Activated CD8-positive, alpha-beta T cell treated with anti-CD3 and anti-CD28 coated beads, Interleukin-2, amount 10 ng/mL, durations not matched to agents 7 days and 5 days (primary cell): ENCODE measurements at regions of chr15 and their contacts with region 1.

Region 1: DNA sequence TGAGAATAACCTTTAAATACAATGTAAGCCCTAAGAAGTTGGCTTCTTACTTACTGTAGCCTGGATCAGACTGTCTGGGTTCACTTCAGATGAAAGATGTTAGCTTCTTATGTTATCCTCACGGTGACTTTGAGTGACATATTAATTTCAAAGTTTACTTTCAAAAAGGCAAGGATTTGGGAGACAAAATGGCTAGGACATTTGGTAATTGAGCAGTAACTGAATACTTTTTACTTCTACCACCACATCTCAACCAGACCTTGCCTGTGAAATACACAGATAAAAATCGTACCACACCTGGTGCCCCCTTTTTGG is 36.0 kb upstream of the BNIP2 start:
- DNase-seq: no peak
- ATAC-seq: no peak
- H3K4me3 Mint-ChIP-seq: no peak overlapping the region
- H3K27ac Mint-ChIP-seq: no peak overlapping the region
- H3K4me1 Mint-ChIP-seq: no peaks in the 10 kb centered on the region
- H3K27me3 Mint-ChIP-seq: peaks cover 15% of the 10 kb centered on the region

Region 2: GRCh38 chr15:59688841-59689625 is 36.1 kb before region 1 on chr15 and contains the start of gene BNIP2:
- CTCF ChIA-PET with region 1: interaction called, 14 read pairs
- POLR2A ChIA-PET with region 1: no interaction called
- DNase-seq: peak; percentile 100
- ATAC-seq: peak; percentile 94
- H3K4me3 Mint-ChIP-seq: peak within 1 kb of the TSS; percentile 88
- H3K27ac Mint-ChIP-seq: peak within 1 kb of the TSS; percentile 96
- H3K4me1 Mint-ChIP-seq: peaks cover 40% of the 10 kb centered on the region
- H3K27me3 Mint-ChIP-seq: no peaks in the 10 kb centered on the region
- total RNA-seq, gene BNIP2: 69.0 to 74.8 TPM

Region 3: GRCh38 chr15:59699810-59700431 is 25.2 kb before region 1 on chr15:
- CTCF ChIA-PET with region 1: no interaction called
- POLR2A ChIA-PET with region 1: no interaction called
- DNase-seq: no peak
- ATAC-seq: no peak
- H3K4me3 Mint-ChIP-seq: no peak overlapping the region
- H3K27ac Mint-ChIP-seq: no peak overlapping the region
- H3K4me1 Mint-ChIP-seq: no peaks in the 10 kb centered on the region
- H3K27me3 Mint-ChIP-seq: peaks cover 19% of the 10 kb centered on the region

Region 4: GRCh38 chr15:59711451-59712243 is 13.5 kb before region 1 on chr15:
- CTCF ChIA-PET with region 1: interaction called, 16 read pairs
- POLR2A ChIA-PET with region 1: no interaction called
- DNase-seq: no peak
- ATAC-seq: no peak
- H3K4me3 Mint-ChIP-seq: no peak overlapping the region
- H3K27ac Mint-ChIP-seq: no peak overlapping the region
- H3K4me1 Mint-ChIP-seq: no peaks in the 10 kb centered on the region
- H3K27me3 Mint-ChIP-seq: peaks cover 11% of the 10 kb centered on the region

Region 5: GRCh38 chr15:59741274-59741906 is 16.3 kb after region 1 on chr15:
- CTCF ChIA-PET with region 1: interaction called, 14 read pairs
- POLR2A ChIA-PET with region 1: interaction called, 3 read pairs
- DNase-seq: no peak
- ATAC-seq: no peak
- H3K4me3 Mint-ChIP-seq: no peak overlapping the region
- H3K27ac Mint-ChIP-seq: no peak overlapping the region
- H3K4me1 Mint-ChIP-seq: no peaks in the 10 kb centered on the region
- H3K27me3 Mint-ChIP-seq: peaks cover 8% of the 10 kb centered on the region

Region 6: GRCh38 chr15:59751552-59752413 is 26.7 kb after region 1 on chr15:
- CTCF ChIA-PET with region 1: interaction called, 15 read pairs
- POLR2A ChIA-PET with region 1: no interaction called
- DNase-seq: no peak
- ATAC-seq: peak; percentile 90
- H3K4me3 Mint-ChIP-seq: no peak overlapping the region
- H3K27ac Mint-ChIP-seq: no peak overlapping the region
- H3K4me1 Mint-ChIP-seq: peaks cover 4% of the 10 kb centered on the region
- H3K27me3 Mint-ChIP-seq: peaks cover 10% of the 10 kb centered on the region

Region 7: GRCh38 chr15:59825913-59826312 is 100.8 kb after region 1 on chr15:
- CTCF ChIA-PET with region 1: no interaction called
- POLR2A ChIA-PET with region 1: no interaction called
- DNase-seq: no peak
- ATAC-seq: no peak
- H3K4me3 Mint-ChIP-seq: no peak overlapping the region
- H3K27ac Mint-ChIP-seq: no peak overlapping the region
- H3K4me1 Mint-ChIP-seq: no peaks in the 10 kb centered on the region
- H3K27me3 Mint-ChIP-seq: peaks cover 6% of the 10 kb centered on the region

Region 8: DNA sequence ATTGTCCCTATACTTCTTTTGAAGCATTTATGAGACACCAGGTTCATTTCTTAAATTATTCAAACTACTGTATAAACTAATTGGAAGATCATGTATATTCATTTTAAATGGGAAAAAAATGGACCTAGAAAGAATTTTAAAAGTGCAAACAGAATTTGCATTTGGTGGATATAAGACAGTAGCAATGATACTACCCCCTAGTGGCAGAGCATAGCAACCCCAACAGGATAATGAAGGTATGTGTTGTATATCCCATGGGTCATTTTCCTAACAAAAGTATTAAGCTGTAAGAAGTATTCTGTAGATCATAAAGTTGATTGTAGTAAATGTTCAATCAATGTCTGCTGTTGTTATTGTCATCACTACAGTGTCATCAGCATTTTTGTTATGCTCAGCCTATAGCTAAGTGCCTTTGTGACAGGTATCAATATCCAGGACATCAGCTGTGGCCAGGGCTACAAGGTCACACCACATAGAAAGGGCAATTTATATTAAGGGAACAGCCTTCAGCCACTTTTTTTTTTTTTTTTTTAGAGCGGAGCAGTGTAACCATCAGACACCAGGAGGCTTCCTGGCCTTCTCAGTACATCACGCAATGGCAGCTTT is 454.8 kb after region 1 on chr15:
- CTCF ChIA-PET with region 1: interaction called, 12 read pairs
- POLR2A ChIA-PET with region 1: no interaction called
- DNase-seq: peak; percentile 55
- ATAC-seq: no peak
- H3K4me3 Mint-ChIP-seq: no peak overlapping the region
- H3K27ac Mint-ChIP-seq: no peak overlapping the region
- H3K4me1 Mint-ChIP-seq: no peaks in the 10 kb centered on the region
- H3K27me3 Mint-ChIP-seq: peaks cover 23% of the 10 kb centered on the region